H1 (cell line): ENCODE measurements at regions of chr10 and their contacts with region 1.

Region 1: GRCh38 chr10:71771821-71772617 is 1.3 kb downstream of the VSIR start:
- DNase-seq: no peak
- H3K4me3 ChIP-seq: no peak overlapping the region
- H3K27ac ChIP-seq: no peak overlapping the region
- H3K4me1 ChIP-seq: peaks cover 0 to 7% (median under 1%) of the 10 kb centered on the region in 4 experiments; a peak in 3 of 7 replicates
- H3K27me3 ChIP-seq: peaks cover 3 to 23% (median 16%) of the 10 kb centered on the region in 4 experiments; a peak in 6 of 7 replicates
- CTCF ChIP-seq: no peak
- EP300 ChIP-seq: no peak
- POLR2A ChIP-seq: no peak
- RAD21 ChIP-seq: no peak

Region 2: GRCh38 chr10:71748671-71749191 is 23.3 kb before region 1 on chr10:
- CTCF ChIA-PET with region 1: interaction called, 11 read pairs
- POLR2A ChIA-PET with region 1: interaction called, 3 read pairs
- DNase-seq: no peak
- H3K4me3 ChIP-seq: no peak overlapping the region
- H3K27ac ChIP-seq: no peak overlapping the region
- H3K4me1 ChIP-seq: peaks cover 1 to 8% (median 4%) of the 10 kb centered on the region in 4 experiments; a peak in 5 of 7 replicates
- H3K27me3 ChIP-seq: 0 out of 7 replicates have a peak, but pooled peaks cover 0 to 2% (median 0%) of the 10 kb centered on the region in 4 experiments
- CTCF ChIP-seq: peak in 2 of 3 experiments; percentile 12; a peak in 1 of 4 replicates
- EP300 ChIP-seq: no peak
- POLR2A ChIP-seq: no peak
- RAD21 ChIP-seq: no peak

Region 3: DNA sequence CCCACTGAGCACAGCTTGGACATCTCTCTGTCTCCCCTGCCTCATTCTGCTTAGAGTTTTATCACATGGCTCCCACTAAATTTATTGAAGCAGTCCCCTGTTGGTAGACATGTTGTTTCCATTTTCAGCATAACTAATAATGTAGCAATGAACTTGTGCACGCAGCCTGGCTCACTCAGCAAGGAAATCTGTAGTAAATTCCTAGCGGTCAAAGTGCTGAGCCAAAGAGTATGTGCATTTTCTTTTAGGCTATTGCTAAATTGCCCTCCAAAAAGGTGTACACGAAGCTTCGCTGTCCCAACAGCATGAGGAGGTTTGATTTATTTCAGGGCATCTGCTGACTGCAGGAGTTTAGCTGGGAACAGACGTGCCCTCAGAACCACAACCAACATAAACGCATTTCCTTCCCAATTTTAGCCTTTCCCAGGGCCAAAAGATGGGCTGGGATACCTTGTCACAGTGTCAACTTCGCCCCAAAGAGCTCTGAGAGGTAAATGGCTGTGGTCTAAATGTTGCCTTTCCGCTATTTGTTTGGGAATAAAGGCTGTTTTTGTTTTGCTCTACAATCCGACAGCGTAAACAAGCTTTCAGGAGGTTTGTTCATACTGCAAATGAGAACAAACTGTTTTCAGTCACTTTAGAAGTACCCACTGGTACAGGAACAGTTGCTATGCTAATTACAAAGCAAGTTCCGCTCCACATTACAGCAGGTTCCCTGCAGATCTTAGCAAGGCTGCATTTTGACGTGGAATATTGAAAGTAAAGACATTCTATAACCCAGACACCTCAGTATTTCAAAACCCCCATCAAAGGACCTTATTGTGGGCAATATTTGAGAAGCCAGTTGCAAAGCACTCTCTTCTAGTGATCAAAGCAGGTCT is 15.5 kb before region 1 on chr10:
- CTCF ChIA-PET with region 1: interaction called, 24 read pairs
- POLR2A ChIA-PET with region 1: interaction called, 3 read pairs
- DNase-seq: no peak
- H3K4me3 ChIP-seq: no peak overlapping the region
- H3K27ac ChIP-seq: no peak overlapping the region
- H3K4me1 ChIP-seq: peaks cover 0 to 7% (median 4%) of the 10 kb centered on the region in 4 experiments; a peak in 5 of 7 replicates
- H3K27me3 ChIP-seq: no peaks in the 10 kb centered on the region; a peak in 3 of 7 replicates
- CTCF ChIP-seq: no peak
- EP300 ChIP-seq: no peak
- POLR2A ChIP-seq: no peak
- RAD21 ChIP-seq: no peak

Region 4: GRCh38 chr10:71782917-71783490 is 11.0 kb after region 1 on chr10:
- CTCF ChIA-PET with region 1: interaction called, 44 read pairs
- POLR2A ChIA-PET with region 1: no interaction called
- DNase-seq: no peak
- H3K4me3 ChIP-seq: no peak overlapping the region; a peak in 1 of 8 replicates
- H3K27ac ChIP-seq: no peak overlapping the region
- H3K4me1 ChIP-seq: peaks cover 0 to 6% (median 2%) of the 10 kb centered on the region in 4 experiments; a peak in 4 of 7 replicates
- H3K27me3 ChIP-seq: no peaks in the 10 kb centered on the region
- CTCF ChIP-seq: no peak
- EP300 ChIP-seq: no peak
- POLR2A ChIP-seq: no peak
- RAD21 ChIP-seq: no peak

Region 5: DNA sequence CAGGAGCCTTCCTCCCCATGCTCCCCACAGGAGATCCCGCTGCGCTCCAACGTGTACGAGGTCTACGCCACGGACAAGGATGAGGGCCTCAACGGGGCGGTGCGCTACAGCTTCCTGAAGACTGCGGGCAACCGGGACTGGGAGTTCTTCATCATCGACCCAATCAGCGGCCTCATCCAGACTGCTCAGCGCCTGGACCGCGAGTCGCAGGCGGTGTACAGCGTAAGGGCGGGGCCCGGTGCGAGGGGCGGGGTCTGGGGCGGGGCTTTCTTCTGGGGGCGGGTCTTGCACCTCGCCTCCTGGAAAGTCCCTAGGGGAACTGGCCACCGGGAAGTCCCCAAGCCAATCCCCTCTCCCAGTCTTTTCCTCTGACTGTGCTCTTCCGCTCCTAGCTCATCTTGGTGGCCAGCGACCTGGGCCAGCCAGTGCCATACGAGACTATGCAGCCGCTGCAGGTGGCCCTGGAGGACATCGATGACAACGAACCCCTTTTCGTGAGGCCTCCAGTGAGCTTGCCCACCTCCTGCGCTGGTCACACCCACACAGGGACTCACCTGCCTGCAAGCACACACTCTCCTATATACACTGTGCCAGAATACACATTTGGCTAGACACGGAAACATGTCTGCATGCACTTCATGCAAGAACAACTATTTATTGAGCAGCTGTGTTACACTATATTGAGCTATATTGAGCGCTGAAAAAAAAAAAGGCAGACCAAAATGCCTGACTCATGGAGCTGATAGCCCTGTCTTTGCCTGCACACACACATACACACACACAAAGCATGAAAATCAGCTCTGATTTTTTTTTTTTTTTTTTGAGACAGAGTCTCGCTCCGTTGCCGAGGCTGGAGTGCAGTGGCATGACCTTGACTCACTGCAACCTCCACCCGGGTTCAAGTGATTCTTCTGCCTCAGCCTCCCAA is 34.0 kb after region 1 on chr10:
- CTCF ChIA-PET with region 1: interaction called, 21 read pairs
- POLR2A ChIA-PET with region 1: no interaction called
- DNase-seq: peak in 1 of 2 experiments; percentile 67
- H3K4me3 ChIP-seq: peak overlapping the region in 2 of 4 experiments; percentile 1 to 50; a peak in 2 of 8 replicates
- H3K27ac ChIP-seq: no peak overlapping the region
- H3K4me1 ChIP-seq: peaks cover 0 to 7% (median 3%) of the 10 kb centered on the region in 4 experiments; a peak in 5 of 7 replicates
- H3K27me3 ChIP-seq: peaks cover 0 to 15% (median 10%) of the 10 kb centered on the region in 4 experiments; a peak in 6 of 7 replicates
- CTCF ChIP-seq: no peak
- EP300 ChIP-seq: no peak
- POLR2A ChIP-seq: no peak
- RAD21 ChIP-seq: no peak

Region 6: DNA sequence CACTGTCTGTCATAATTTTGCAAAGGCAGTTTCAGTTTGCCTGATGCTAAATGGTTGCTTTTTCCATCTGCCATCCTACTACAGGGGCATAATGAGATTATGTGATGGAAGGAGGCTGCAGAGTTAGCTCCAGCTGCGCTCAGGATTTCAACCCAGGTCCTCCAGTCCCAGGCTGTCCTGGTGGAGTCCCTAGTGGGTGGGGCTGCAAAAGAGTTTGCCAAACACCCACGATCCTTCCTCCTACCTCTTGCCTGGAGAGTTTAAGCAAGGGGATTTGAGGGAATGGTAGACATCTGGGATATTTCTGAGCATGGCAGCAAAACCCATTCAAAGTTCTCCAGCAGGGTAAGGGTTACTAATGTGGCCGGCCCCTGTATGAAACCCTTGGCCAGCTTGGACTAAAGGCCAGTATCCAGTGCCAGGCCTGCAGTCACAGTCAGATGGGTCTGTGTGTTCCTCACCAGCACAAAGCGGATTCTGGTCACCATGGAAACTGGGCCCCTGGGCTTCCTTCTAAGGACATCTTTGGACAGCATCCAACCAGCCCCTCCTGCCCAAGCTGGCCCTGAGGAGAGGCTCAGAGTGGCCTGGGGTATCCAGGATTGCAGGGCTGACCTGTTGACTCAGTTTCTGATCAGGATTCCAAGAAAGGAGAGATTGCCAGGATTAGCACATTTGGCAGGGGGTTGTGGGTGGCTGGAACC is 149.5 kb after region 1 on chr10:
- CTCF ChIA-PET with region 1: no interaction called
- POLR2A ChIA-PET with region 1: no interaction called
- DNase-seq: no peak
- H3K4me3 ChIP-seq: no peak overlapping the region
- H3K27ac ChIP-seq: no peak overlapping the region
- H3K4me1 ChIP-seq: no peaks in the 10 kb centered on the region
- H3K27me3 ChIP-seq: no peaks in the 10 kb centered on the region
- CTCF ChIP-seq: no peak
- EP300 ChIP-seq: no peak
- POLR2A ChIP-seq: no peak
- RAD21 ChIP-seq: no peak